GM12878 (cell line): ENCODE measurements at regions of chr5 and their contacts with region 1.

Region 1: DNA sequence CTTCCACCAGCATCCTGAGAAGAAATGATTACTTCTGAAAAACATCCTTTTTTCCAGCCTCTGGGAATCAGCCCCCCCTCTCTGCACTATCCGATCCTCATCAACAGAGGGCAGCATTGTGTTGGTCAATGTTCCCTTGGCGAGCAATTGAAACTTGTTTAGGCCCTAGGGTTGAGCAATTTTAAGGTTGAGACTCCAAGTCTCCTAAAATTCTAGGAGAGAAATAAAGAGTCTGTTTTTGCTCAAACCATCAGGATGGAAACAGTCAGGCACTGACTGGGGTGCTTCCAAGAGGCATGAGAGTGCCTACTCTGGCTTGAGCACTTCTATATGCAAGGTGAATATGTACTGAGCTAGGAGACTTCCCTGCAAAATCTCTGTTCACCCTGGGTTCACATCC is 12.4 kb upstream of the CYFIP2 start:
- DNase-seq: no peak
- ATAC-seq: peak; percentile 82
- H3K4me3 ChIP-seq: peak overlapping the region; percentile 4; the same call in 1 of the 2 replicates
- H3K27ac ChIP-seq: no peak overlapping the region; the same call in 1 of the 2 replicates
- H3K4me1 ChIP-seq: peaks cover 15% of the 10 kb centered on the region
- H3K27me3 ChIP-seq: no peaks in the 10 kb centered on the region
- CTCF ChIP-seq: peak; percentile 85 to 97 (median 88)
- EP300 ChIP-seq: no peak
- POLR2A ChIP-seq: no peak
- RAD21 ChIP-seq: peak; percentile 97

Region 2: GRCh38 chr5:156870498-156870839 is 383.1 kb before region 1 on chr5:
- CTCF ChIA-PET with region 1: no interaction called
- POLR2A ChIA-PET with region 1: no interaction called
- RAD21 ChIA-PET with region 1: no interaction called
- SMC1A ChIA-PET with region 1: no interaction called
- in situ Hi-C with region 1: no loop called
- intact Hi-C with region 1: no loop called
- DNase-seq: no peak
- ATAC-seq: no peak
- H3K4me3 ChIP-seq: no peak overlapping the region
- H3K27ac ChIP-seq: no peak overlapping the region
- H3K4me1 ChIP-seq: no peaks in the 10 kb centered on the region
- H3K27me3 ChIP-seq: no peaks in the 10 kb centered on the region
- CTCF ChIP-seq: no peak
- EP300 ChIP-seq: no peak
- POLR2A ChIP-seq: no peak
- RAD21 ChIP-seq: no peak

Region 3: DNA sequence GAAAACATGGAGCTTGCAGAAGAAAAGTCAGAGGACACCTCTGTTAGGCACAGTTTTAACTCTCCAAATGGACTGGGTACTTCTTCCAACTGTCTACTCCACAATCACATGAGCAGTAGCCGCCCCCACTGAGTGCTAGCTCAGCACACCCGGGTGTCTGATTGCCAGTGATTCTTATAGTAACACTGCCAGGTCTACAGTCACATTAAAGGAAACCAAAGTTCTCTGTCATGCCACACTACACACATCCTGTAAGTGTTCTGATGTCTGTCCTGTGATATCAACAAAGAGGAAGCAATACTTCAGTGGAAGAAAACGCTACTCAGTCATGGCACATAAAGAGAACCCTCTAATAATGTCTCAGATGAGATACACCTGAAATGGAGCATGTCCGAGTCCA is 144.6 kb before region 1 on chr5 and contains the start of gene HAVCR2:
- CTCF ChIA-PET with region 1: no interaction called
- POLR2A ChIA-PET with region 1: no interaction called
- RAD21 ChIA-PET with region 1: no interaction called
- SMC1A ChIA-PET with region 1: no interaction called
- in situ Hi-C with region 1: no loop called
- intact Hi-C with region 1: no loop called
- DNase-seq: peak; percentile 83
- ATAC-seq: peak; percentile 90
- H3K4me3 ChIP-seq: peak within 1 kb of the TSS; percentile 46
- H3K27ac ChIP-seq: peak within 1 kb of the TSS; percentile 87
- H3K4me1 ChIP-seq: peaks cover 12% of the 10 kb centered on the region
- H3K27me3 ChIP-seq: no peaks in the 10 kb centered on the region
- CTCF ChIP-seq: no peak
- EP300 ChIP-seq: 0 out of 4 replicates have a peak, but pooled peaks of 1 of the 2 experiments have one; percentile 0
- POLR2A ChIP-seq: 0 out of 2 replicates have a peak, but pooled peaks have one; percentile 41
- RAD21 ChIP-seq: no peak
- polyA plus RNA-seq, gene HAVCR2: 7.2 to 7.5 TPM

Region 4: GRCh38 chr5:157148734-157149615 is 104.6 kb before region 1 on chr5:
- CTCF ChIA-PET with region 1: interaction called, 244 read pairs
- POLR2A ChIA-PET with region 1: interaction called, 10 read pairs
- RAD21 ChIA-PET with region 1: interaction called, 159 read pairs
- SMC1A ChIA-PET with region 1: interaction called, 138 read pairs
- in situ Hi-C with region 1: loop called (anchors 5 kb)
- intact Hi-C with region 1: loop called (anchors 1 kb)
- DNase-seq: peak; percentile 40
- ATAC-seq: peak; percentile 92
- H3K4me3 ChIP-seq: no peak overlapping the region
- H3K27ac ChIP-seq: no peak overlapping the region
- H3K4me1 ChIP-seq: no peaks in the 10 kb centered on the region
- H3K27me3 ChIP-seq: no peaks in the 10 kb centered on the region
- CTCF ChIP-seq: peak; percentile 73 to 91 (median 90)
- EP300 ChIP-seq: no peak
- POLR2A ChIP-seq: no peak
- RAD21 ChIP-seq: peak; percentile 99

Region 5: DNA sequence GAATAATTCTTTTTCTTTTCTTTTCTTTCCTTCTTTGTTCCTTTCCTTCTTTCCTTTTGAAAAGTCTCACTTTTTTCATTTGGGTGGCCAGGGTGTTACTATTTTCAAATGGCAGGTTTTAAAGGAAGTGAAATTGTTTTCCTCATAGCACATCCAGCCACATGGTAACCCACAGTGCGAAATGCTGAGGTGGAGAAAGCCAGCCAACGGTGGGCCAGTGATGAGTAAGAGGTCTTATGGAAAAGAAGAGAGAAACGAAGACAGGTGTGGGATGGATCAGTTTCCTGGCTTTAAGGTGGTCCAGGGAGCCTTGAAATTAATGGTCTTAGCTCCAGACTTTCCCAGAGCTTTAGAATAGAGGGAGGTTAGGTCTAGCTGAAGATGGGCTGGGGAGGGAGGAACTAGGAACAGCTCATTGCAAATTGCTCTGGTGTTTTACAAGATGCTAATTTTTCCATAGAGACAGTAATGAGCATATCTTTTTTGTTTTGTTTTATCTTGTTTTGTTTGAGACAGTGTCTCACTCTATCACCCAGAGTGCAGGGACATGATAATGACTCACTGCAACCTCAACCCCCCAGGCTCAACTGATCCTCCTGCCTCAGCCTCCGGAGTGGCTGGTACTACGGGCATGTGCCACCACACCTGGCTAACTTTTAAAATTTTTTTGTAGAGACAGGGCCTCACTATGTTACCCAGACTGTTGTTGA is 55.1 kb before region 1 on chr5:
- CTCF ChIA-PET with region 1: interaction called, 4 read pairs
- POLR2A ChIA-PET with region 1: interaction called, 3 read pairs
- RAD21 ChIA-PET with region 1: interaction called, 4 read pairs
- SMC1A ChIA-PET with region 1: interaction called, 10 read pairs
- in situ Hi-C with region 1: no loop called
- intact Hi-C with region 1: no loop called
- DNase-seq: no peak
- ATAC-seq: peak; percentile 67
- H3K4me3 ChIP-seq: no peak overlapping the region
- H3K27ac ChIP-seq: no peak overlapping the region
- H3K4me1 ChIP-seq: no peaks in the 10 kb centered on the region
- H3K27me3 ChIP-seq: no peaks in the 10 kb centered on the region
- CTCF ChIP-seq: no peak
- EP300 ChIP-seq: no peak
- POLR2A ChIP-seq: no peak
- RAD21 ChIP-seq: no peak

Region 6: DNA sequence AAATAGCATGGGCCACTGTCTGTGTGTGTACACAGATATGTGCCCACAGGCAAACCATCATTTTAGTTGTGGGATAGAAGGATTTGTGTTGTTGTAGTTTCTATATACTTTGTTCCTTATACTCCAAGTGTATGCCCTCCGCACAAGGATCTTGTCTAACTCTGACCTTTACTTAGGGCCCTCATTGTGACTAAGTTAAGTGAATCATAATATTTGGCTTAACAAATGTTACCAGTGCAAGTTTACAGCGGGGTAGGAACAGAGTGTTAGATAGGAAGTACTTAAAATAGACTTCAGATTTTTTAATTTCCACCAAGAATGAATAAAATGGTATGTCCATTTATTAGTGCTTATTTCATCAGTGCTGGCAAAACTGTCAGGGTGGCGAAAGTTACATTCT is 17.1 kb before region 1 on chr5:
- CTCF ChIA-PET with region 1: interaction called, 15 read pairs
- POLR2A ChIA-PET with region 1: no interaction called
- RAD21 ChIA-PET with region 1: interaction called, 3 read pairs
- SMC1A ChIA-PET with region 1: interaction called, 29 read pairs
- in situ Hi-C with region 1: no loop called
- intact Hi-C with region 1: no loop called
- DNase-seq: no peak
- ATAC-seq: no peak
- H3K4me3 ChIP-seq: no peak overlapping the region
- H3K27ac ChIP-seq: no peak overlapping the region
- H3K4me1 ChIP-seq: no peaks in the 10 kb centered on the region
- H3K27me3 ChIP-seq: no peaks in the 10 kb centered on the region
- CTCF ChIP-seq: no peak
- EP300 ChIP-seq: no peak
- POLR2A ChIP-seq: no peak
- RAD21 ChIP-seq: no peak

Region 7: GRCh38 chr5:157290981-157291711 is 37.6 kb after region 1 on chr5:
- CTCF ChIA-PET with region 1: interaction called, 27 read pairs
- POLR2A ChIA-PET with region 1: no interaction called
- RAD21 ChIA-PET with region 1: interaction called, 5 read pairs
- SMC1A ChIA-PET with region 1: interaction called, 23 read pairs
- in situ Hi-C with region 1: no loop called
- intact Hi-C with region 1: loop called (anchors 5 kb)
- DNase-seq: no peak
- ATAC-seq: peak; percentile 95
- H3K4me3 ChIP-seq: no peak overlapping the region
- H3K27ac ChIP-seq: 0 out of 2 replicates have a peak overlapping the region, but pooled peaks have one; percentile 20
- H3K4me1 ChIP-seq: peaks cover 4% of the 10 kb centered on the region
- H3K27me3 ChIP-seq: no peaks in the 10 kb centered on the region
- CTCF ChIP-seq: no peak
- EP300 ChIP-seq: peak in 1 of 2 experiments; percentile 20; a peak in 1 of 4 replicates
- POLR2A ChIP-seq: no peak
- RAD21 ChIP-seq: no peak

Region 8: DNA sequence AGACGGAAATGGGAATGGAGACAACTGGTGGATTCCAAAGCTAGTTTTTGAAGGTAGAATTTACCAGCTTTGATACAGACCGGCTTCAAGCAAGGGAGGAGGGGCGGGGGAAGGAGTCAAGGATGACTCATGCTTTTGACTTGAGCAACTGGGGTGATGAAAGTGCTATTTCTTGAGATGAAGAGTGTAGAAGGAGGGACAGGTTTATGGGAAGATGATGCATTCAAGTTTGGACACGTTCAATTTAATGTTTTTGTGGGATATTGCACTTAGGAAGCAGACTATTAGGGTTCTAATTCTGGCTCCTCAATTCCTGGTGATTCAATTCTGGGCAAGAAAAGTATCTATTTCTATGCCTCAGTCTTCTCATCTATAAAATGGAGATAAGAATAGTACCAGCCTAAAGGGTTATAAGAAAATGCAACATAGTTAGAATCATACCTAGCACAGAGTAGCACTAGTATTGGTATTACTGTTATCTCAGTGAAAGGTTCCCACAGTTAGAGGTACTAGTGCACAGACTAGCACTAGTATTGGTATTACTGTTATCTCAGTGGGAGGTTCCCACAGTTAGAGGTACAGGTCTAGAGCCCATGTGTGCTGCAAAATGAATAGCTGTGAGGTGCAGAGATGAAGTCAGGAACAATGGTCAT is 211.1 kb after region 1 on chr5:
- CTCF ChIA-PET with region 1: interaction called, 11 read pairs
- POLR2A ChIA-PET with region 1: no interaction called
- RAD21 ChIA-PET with region 1: interaction called, 4 read pairs
- SMC1A ChIA-PET with region 1: interaction called, 3 read pairs
- in situ Hi-C with region 1: no loop called
- intact Hi-C with region 1: loop called (anchors 10 kb)
- DNase-seq: peak; percentile 28
- ATAC-seq: peak; percentile 84
- H3K4me3 ChIP-seq: peak overlapping the region; percentile 6; the same call in 1 of the 2 replicates
- H3K27ac ChIP-seq: peak overlapping the region; percentile 78
- H3K4me1 ChIP-seq: peaks cover 23% of the 10 kb centered on the region
- H3K27me3 ChIP-seq: no peaks in the 10 kb centered on the region; a peak in 2 of 4 replicates
- CTCF ChIP-seq: no peak
- EP300 ChIP-seq: no peak
- POLR2A ChIP-seq: no peak
- RAD21 ChIP-seq: no peak

Region 9: DNA sequence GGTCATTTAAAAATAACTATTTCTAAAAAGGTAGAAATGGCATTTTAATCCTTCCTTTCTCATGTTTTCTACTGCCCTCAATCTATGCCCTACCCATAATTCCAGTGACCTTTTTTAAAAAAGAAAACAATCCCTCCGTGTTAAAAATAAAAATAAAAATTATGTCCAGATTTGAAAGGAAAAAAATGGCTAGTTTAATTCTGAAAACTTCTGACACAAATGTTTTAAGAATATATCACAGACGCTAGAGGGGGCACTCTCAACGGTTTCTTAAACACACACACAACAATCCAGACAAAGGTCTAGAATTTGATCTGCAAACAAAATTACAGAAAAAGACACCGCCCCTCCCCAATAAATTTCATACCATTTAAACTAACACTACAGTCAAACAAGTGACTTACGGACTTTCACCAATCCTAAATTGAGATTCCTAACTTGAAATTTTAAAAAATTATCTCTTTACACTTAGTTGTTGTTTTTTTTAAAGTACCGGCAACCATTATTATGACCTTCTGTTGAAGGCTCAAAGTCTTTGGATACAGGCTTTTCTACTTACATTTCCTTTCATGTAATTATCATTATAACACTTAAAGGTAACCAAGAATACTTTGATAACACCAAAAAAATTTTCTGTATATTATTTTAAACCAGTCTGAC is 567.2 kb after region 1 on chr5:
- CTCF ChIA-PET with region 1: no interaction called
- POLR2A ChIA-PET with region 1: no interaction called
- RAD21 ChIA-PET with region 1: no interaction called
- SMC1A ChIA-PET with region 1: no interaction called
- in situ Hi-C with region 1: no loop called
- intact Hi-C with region 1: no loop called
- DNase-seq: no peak
- ATAC-seq: peak; percentile 69
- H3K4me3 ChIP-seq: no peak overlapping the region
- H3K27ac ChIP-seq: no peak overlapping the region
- H3K4me1 ChIP-seq: no peaks in the 10 kb centered on the region
- H3K27me3 ChIP-seq: no peaks in the 10 kb centered on the region
- CTCF ChIP-seq: peak; percentile 39 to 56 (median 49); a peak in 5 of 6 replicates
- EP300 ChIP-seq: no peak
- POLR2A ChIP-seq: no peak
- RAD21 ChIP-seq: peak; percentile 63